ENCODE measurements at regions of chr1 and their contacts with region 1.

Region 1: DNA sequence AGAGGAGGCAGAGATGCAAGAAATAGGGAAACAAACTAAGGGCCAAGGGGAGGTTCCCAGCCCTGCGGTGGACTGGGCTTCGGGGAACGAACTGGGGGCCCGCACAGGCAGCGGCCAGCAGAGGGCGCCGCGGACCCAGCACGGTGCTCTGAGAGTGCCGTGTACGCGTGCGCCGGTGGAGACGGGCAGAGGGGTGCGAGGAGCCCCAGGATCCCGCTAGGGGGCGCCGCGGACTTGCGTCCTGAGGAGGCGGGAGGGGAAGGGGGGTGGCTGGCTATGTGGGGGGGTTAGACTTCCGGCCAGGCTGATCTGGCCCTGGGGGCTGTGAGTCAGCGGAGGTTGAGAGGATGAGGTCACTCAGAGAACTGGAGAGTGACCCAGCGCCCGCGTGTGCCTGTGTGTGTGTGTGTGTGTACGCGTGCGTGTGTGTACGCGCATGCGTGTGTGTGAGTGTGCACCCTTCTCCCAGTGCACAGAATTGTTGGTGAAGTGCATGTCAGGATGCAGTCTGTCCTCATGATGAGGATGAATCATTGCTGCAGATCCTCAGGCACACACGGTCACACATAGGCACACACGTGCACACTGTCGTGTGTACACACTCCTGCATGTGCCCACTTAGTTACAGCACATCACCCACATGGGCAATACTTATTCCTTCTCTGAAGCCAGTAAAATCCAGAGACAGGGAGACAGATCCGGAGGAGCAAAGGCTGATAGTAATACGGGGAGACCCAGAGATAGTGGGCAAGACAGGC is 17.0 kb downstream of the NES start:
- DNase-seq: peak; percentile 94
- H3K4me3 Mint-ChIP-seq: peak overlapping the region; percentile 69
- H3K27ac Mint-ChIP-seq: peak overlapping the region; percentile 80
- H3K4me1 Mint-ChIP-seq: peaks cover 67% of the 10 kb centered on the region
- H3K27me3 Mint-ChIP-seq: peaks cover 84% of the 10 kb centered on the region

Region 2: GRCh38 chr1:156625436-156626078 is 34.6 kb before region 1 on chr1:
- CTCF ChIA-PET with region 1: interaction called, 264 read pairs
- DNase-seq: peak; percentile 74
- H3K4me3 Mint-ChIP-seq: peak overlapping the region; percentile 4
- H3K27ac Mint-ChIP-seq: peak overlapping the region; percentile 31
- H3K4me1 Mint-ChIP-seq: peaks cover 12% of the 10 kb centered on the region
- H3K27me3 Mint-ChIP-seq: peaks cover 84% of the 10 kb centered on the region

Region 3: GRCh38 chr1:156648951-156649350 is 11.2 kb before region 1 on chr1:
- CTCF ChIA-PET with region 1: interaction called, 30 read pairs
- DNase-seq: no peak
- H3K4me3 Mint-ChIP-seq: no peak overlapping the region
- H3K27ac Mint-ChIP-seq: no peak overlapping the region
- H3K4me1 Mint-ChIP-seq: peaks cover 9% of the 10 kb centered on the region
- H3K27me3 Mint-ChIP-seq: peaks cover 99% of the 10 kb centered on the region

Region 4: GRCh38 chr1:156689035-156689952 is 29.1 kb after region 1 on chr1:
- CTCF ChIA-PET with region 1: interaction called, 13 read pairs
- DNase-seq: peak; percentile 84
- H3K4me3 Mint-ChIP-seq: no peak overlapping the region
- H3K27ac Mint-ChIP-seq: no peak overlapping the region
- H3K4me1 Mint-ChIP-seq: peaks cover 34% of the 10 kb centered on the region
- H3K27me3 Mint-ChIP-seq: peaks cover 81% of the 10 kb centered on the region